SK-N-SH (cell line): ENCODE measurements at regions of chr2 and their contacts with region 1.

Region 1: DNA sequence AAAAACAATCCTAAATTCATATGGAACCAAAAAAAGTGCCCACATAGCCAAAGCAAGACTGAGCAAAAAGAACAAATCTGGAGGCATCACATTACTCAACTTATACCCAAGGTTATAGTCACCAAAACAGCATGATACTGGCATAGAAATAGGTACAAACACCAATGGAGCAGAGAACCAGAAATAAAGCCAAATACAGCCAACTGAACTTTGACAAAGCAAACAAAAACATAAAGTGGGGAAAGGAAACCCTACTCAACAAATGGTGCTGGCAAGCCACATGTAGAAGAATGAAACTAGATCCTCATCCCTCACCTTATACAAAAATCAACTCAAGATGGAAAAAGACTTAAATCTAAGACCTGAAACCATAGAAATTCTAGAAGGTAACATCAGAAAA is 40.5 kb downstream of the CRYGD start:
- DNase-seq: no peak
- H3K4me3 ChIP-seq: no peak overlapping the region
- H3K27ac ChIP-seq: no peak overlapping the region
- H3K4me1 ChIP-seq: no peaks in the 10 kb centered on the region
- H3K27me3 ChIP-seq: no peaks in the 10 kb centered on the region
- CTCF ChIP-seq: no peak
- EP300 ChIP-seq: no peak
- RAD21 ChIP-seq: no peak

Region 2: DNA sequence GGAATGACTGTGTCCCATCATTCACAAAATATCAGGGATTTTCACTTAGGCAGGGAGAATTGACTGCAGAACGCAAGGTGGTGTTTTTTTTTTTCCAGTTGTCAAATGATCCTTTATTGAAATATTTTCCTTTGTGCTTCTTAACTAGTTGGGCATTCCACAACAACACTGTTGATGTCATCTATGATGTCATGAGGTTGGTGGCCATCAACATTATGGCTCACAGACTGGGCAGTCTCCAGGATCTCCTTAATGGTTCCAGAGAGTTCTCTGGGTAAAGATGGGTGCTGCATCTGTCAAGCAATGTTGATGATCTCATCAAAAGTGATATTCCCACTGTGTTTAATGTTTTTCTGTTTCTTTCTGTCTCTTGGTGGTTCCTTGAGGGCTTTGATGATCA is 26.7 kb before region 1 on chr2:
- CTCF ChIA-PET with region 1: no interaction called
- POLR2A ChIA-PET with region 1: no interaction called
- DNase-seq: no peak
- H3K4me3 ChIP-seq: no peak overlapping the region
- H3K27ac ChIP-seq: no peak overlapping the region
- H3K4me1 ChIP-seq: no peaks in the 10 kb centered on the region
- H3K27me3 ChIP-seq: no peaks in the 10 kb centered on the region
- CTCF ChIP-seq: no peak
- EP300 ChIP-seq: no peak
- RAD21 ChIP-seq: no peak

Region 3: DNA sequence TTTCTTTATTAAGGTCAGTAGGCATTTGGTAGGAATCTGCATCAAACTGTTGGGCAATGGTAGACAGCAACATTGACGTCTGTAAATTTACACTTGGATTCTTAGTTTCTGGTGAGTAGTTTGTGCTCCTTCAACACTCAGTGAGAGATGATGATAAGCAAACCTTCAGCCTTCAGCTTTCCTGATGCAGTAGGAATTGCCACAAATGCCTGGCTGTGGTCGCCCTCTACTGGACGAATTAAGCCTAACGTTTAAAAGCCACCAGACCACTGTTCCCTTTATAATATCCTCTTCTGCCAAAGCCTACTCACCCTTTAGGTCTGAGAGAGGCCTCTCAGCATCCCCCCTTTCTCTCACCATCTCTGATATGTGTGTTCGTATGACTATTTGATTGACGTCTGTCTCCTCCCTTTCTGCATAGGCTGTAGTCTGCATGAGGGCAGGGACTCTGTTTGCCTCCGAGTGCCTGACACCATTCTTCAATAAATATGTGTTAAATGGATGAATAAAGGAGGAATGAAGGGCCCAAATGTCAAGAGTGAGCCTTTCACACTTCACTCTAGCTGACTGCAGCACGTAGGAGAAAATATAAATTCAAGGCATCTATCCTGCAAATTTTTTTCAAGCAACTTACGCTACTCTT is 11.4 kb before region 1 on chr2:
- CTCF ChIA-PET with region 1: interaction called, 11 read pairs
- POLR2A ChIA-PET with region 1: no interaction called
- DNase-seq: peak; percentile 71
- H3K4me3 ChIP-seq: no peak overlapping the region; a peak in 1 of 4 replicates
- H3K27ac ChIP-seq: no peak overlapping the region
- H3K4me1 ChIP-seq: no peaks in the 10 kb centered on the region
- H3K27me3 ChIP-seq: no peaks in the 10 kb centered on the region
- CTCF ChIP-seq: peak; percentile 84
- EP300 ChIP-seq: no peak
- RAD21 ChIP-seq: peak; percentile 96